ENCODE measurements at regions of chr5 and their contacts with region 1.

Region 1: DNA sequence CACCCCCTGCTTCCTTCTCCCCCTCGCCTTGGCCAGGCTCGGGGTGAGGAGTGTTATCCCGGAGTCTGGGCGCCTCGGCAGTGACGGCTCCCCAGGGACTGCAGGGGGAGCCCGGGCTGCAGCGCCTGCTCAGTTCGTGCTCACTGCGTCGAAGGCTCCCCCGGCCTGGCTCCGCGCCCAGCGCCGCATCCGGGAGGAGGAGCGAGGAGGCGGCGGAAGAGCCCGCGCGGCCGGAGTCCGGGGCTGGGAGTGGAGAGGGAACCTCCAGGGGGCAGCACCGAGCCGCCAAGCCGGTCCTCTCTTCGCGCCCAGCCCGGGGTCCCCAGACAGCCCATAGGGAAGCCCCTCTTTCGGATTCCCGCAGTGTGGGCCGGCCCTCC is 1.3 kb upstream of the EGR1 start:
- DNase-seq: no peak
- H3K4me3 ChIP-seq: peak overlapping the region; percentile 82
- CTCF ChIP-seq: peak; percentile 87

Region 2: GRCh38 chr5:138482638-138483037 is 18.6 kb after region 1 on chr5:
- CTCF ChIA-PET with region 1: interaction called, 16 read pairs
- POLR2A ChIA-PET with region 1: interaction called, 23 read pairs
- DNase-seq: no peak
- H3K4me3 ChIP-seq: no peak overlapping the region
- CTCF ChIP-seq: no peak

Region 3: DNA sequence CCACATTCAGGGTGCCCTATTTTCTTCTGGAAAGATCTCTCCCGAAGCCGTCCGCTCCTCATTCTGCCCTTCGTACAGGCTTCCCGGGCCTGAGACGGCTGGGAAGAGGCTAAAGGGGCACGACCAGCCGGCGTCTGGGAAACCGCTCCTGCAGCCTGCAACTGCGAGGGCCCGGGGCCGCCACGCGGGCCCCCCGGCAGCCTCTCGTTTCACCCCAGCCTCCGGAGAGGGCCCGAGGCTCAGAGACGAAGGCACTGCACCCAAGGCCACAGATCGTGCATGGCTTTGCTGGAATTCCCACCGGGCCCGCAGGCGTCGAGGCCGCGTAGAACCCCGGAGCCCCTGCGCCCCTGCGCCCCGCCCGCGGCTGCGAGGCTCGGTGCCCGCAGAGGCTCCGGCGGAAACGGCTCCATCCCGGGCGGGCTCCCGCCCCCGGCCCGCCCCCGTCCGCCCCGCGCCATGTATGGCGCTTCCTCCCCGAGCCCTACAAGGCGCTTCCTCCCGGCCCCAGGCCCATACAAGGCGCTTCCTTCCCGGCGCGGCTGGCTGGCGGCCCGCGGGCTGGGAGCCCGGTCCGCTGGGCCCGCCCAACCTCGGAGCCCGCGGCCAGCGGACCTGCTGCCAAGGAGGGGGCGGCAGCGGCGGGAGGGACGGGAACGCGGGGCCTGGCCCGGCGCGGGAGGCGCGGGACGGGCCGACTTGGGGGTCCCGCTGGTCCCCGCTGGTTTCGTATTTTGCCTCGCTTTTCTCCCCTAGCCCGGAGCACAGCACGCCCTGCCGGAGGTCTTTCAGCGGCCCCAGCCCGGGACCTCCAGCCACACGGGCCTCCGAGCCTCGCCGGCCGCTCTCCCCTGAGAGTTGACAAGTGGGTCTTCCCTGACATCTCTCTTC is 27.9 kb after region 1 on chr5:
- CTCF ChIA-PET with region 1: interaction called, 407 read pairs
- POLR2A ChIA-PET with region 1: interaction called, 23 read pairs
- DNase-seq: no peak
- H3K4me3 ChIP-seq: peak overlapping the region; percentile 62
- CTCF ChIP-seq: no peak

Region 4: GRCh38 chr5:138542956-138543729 is 79.1 kb after region 1 on chr5 and contains the start of gene ETF1:
- CTCF ChIA-PET with region 1: interaction called, 13 read pairs
- POLR2A ChIA-PET with region 1: interaction called, 36 read pairs
- DNase-seq: peak; percentile 97
- H3K4me3 ChIP-seq: peak within 1 kb of the TSS; percentile 97
- CTCF ChIP-seq: no peak

Region 5: GRCh38 chr5:138927979-138928378 is 464.0 kb after region 1 on chr5:
- CTCF ChIA-PET with region 1: no interaction called
- POLR2A ChIA-PET with region 1: no interaction called
- DNase-seq: no peak
- H3K4me3 ChIP-seq: no peak overlapping the region
- CTCF ChIP-seq: no peak

Measured in AG04449 (cell line).